ENCODE measurements at regions of chr13 and their contacts with region 1.

Region 1: GRCh38 chr13:46160471-46161066 is 21.4 kb downstream of the LCP1 start:
- DNase-seq: no peak
- ATAC-seq: peak in 1 of 2 donors; percentile 44

Region 2: DNA sequence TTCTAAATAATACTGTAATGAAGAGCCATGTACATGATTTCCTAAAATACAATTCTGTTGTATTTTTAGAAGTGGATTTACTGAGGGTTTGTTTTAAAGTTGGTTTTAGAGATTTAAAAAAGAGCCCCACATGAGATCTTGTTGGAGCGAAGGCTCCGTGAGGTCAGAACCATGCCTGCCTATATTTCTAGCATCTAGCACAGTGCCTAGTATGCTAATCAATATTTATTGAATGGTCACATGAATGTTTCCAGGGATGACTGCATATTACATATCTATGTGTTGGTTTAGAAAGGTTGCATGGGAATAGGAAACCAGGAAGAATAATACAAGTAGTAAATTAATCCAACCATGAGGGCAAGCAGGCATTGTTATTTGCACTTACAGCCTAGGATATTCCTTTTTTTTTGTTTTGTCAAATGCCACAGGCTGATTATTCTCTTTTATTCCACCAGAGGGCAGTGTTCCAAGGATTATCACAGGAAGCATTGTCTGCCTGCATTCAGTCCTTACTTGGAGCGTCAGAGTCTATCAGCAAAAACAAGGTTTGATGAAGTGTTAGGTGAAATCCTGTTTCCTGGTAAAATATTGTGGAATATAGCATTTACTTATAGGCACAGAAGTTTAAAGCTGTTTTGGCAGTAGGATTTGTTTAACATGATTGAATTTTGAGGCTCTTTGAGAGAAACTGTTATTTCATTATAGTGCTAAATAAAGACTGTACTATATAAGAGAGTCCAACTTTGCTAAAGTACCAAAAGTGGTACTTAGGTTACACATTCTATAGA is 649.1 kb before region 1 on chr13:
- intact Hi-C with region 1: loop called in 1 of 2 experiments (anchors 5 kb)
- DNase-seq: no peak
- ATAC-seq: peak; percentile 47 to 68

Region 3: DNA sequence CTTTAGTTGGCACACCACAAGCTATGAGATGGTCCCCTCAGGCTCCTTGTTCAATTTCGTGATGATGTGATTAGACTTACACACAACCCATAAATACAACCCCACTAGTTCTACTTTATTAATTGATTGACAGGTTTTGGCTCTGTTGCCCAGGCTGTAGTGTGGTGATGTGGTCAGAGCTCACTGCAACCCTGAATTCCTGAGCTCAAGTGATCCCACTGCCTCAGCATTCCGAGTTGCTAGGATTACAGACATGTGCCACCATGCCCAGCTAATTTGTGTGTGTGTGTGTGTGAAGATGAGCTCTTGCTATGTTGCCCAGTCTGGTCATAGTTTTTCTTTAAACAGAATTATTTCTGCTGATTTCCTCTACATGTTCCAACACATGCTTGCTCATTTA is 753.8 kb after region 1 on chr13:
- intact Hi-C with region 1: no loop called
- DNase-seq: no peak
- ATAC-seq: no peak